Activated CD4-positive, alpha-beta memory T cell treated with anti-CD3 and anti-CD28 coated beads for 36 hours (primary cell): ENCODE measurements at regions of chr12 and their contacts with region 1.

Region 1: GRCh38 chr12:131092901-131093603 is 139.3 kb downstream of the ADGRD1 start:
- DNase-seq: peak; percentile 39
- H3K4me3 Mint-ChIP-seq: no peak overlapping the region
- H3K27ac Mint-ChIP-seq: no peak overlapping the region
- H3K4me1 Mint-ChIP-seq: peaks cover 18% of the 10 kb centered on the region
- H3K27me3 Mint-ChIP-seq: peaks cover 5% of the 10 kb centered on the region

Region 2: DNA sequence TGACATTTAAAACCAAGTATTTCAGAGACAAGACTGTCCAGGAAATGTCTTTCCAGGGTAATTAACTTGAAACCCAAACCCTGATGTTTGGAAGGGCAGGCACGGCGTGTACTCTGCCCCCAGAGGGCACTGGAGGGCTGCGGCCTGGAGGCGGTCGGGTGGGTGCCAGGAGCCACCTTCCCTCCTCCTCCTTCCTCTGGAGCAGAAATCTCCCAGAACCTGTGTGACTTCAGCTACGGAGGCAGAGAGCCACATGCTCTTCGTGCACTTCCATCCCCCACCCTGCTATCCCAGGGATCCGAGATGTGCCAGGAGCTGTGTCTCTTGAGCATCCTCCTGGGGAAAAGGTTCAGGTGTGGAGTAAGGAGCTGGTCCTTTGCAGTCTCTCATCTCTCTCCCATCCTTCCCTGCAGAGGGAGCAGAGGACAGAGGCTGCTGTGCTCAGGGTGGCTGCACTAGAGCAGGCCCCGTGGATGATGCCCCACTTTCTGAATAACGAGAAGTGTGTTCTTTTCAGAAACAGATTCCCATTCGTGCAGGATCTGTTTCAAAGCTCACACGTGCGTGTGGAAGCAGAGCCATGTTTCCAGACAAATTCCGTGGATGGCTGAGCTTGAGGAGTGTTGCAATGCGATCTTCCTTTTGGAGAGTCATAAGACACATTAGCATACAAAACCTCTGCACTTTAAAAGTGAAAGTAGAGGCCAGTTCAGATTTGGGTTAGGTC is 23.5 kb after region 1 on chr12:
- CTCF ChIA-PET with region 1: no interaction called
- POLR2A ChIA-PET with region 1: no interaction called
- intact Hi-C with region 1: loop called (anchors 1 kb)
- DNase-seq: no peak
- H3K4me3 Mint-ChIP-seq: no peak overlapping the region
- H3K27ac Mint-ChIP-seq: no peak overlapping the region
- H3K4me1 Mint-ChIP-seq: peaks cover 2% of the 10 kb centered on the region
- H3K27me3 Mint-ChIP-seq: peaks cover 17% of the 10 kb centered on the region

Region 3: DNA sequence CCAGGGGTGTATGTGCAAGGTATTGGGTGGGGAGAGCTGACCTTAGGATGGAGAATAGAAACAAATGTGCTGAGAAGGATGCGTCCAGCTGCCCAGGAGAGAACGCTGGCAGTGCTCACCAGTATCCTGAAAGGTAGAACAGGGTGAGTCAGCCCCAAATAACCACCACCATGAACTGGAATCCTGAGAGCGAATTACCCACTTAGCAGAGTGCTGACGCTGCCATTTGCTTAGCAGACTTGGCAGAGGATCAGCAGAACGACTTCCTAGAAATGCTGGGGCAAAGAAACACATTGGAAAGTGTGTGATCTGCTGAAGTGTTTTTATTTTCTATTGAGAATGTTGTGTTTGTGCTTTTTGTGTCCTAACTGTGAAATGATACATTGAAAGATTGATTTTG is 74.3 kb after region 1 on chr12:
- CTCF ChIA-PET with region 1: no interaction called
- POLR2A ChIA-PET with region 1: no interaction called
- intact Hi-C with region 1: no loop called
- DNase-seq: no peak
- H3K4me3 Mint-ChIP-seq: no peak overlapping the region
- H3K27ac Mint-ChIP-seq: no peak overlapping the region
- H3K4me1 Mint-ChIP-seq: no peaks in the 10 kb centered on the region
- H3K27me3 Mint-ChIP-seq: peaks cover 23% of the 10 kb centered on the region